Naive thymus-derived CD8-positive, alpha-beta T cell (primary cell): ENCODE measurements at regions of chr6 and their contacts with region 1.

Region 1: GRCh38 chr6:30793521-30794194 is 49.3 kb upstream of the IER3 start:
- DNase-seq: peak in 3 of 10 donors; percentile 39 to 60 (median 55)
- ATAC-seq: peak; percentile 95 to 97
- H3K4me3 Mint-ChIP-seq: peak overlapping the region; percentile 51 to 89 (median 78)
- H3K27ac Mint-ChIP-seq: peak overlapping the region; percentile 93 to 99 (median 96)
- H3K4me1 Mint-ChIP-seq: peaks cover 20 to 54% (median 50%) of the 10 kb centered on the region in 4 donors
- H3K27me3 Mint-ChIP-seq: no peaks in the 10 kb centered on the region

Region 2: DNA sequence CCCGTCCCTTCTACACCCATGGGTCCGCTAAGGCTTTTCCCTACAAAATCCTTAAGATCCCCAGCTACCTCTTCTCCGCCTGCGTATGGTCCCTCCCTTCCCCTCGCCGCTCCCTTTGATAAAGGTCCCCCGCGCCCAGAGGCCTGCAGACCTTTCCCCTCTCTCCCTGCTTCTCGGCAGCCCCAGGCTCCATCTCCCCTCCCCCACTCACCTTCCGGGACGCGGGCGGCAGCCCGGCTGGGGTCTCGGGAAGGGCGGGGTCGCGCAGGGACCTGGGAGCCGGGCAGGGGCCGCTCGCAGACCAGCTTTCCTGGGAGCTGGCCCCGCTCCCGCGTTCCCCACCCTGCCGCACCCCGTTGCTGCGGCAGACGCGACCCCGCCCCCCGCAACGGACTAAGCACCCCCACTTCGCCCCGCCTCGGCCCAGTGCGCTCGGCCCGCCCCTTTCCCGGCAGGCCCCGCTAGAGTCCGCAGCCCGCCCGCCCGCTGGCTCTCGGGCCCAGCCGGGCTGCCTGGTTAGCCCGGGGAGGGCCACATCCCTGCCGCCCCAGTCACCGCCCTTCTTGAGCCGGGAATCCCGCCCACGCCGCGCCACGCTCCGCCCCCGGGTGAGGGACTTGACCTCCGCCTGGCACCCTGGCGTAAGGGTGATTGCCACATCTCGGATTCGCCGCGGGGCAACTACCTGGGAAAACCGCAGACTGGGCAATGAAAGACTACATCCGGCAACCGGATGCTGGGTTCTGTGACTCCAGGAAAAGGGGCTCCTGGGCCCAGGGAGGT is 51.2 kb before region 1 on chr6 and contains the start of gene FLOT1:
- POLR2A ChIA-PET with region 1: interaction called, 10 read pairs
- DNase-seq: peak in 9 of 10 donors; percentile 51 to 83 (median 67)
- ATAC-seq: peak; percentile 49 to 54
- H3K4me3 Mint-ChIP-seq: peak within 1 kb of the TSS; percentile 88 to 97 (median 94)
- H3K27ac Mint-ChIP-seq: peak within 1 kb of the TSS; percentile 89 to 96 (median 92)
- H3K4me1 Mint-ChIP-seq: peaks cover 42 to 75% (median 67%) of the 10 kb centered on the region in 4 donors
- H3K27me3 Mint-ChIP-seq: no peaks in the 10 kb centered on the region
- polyA plus RNA-seq, gene FLOT1: 76.0 to 98.4 (median 78.4) TPM